ENCODE measurements at regions of chr10 and their contacts with region 1.

Region 1: GRCh38 chr10:94362360-94363250 is at the start of gene NOC3L:
- DNase-seq: peak; percentile 97 to 98
- H3K4me3 ChIP-seq: peak within 1 kb of the TSS; percentile 56 to 90 (median 67)
- H3K27ac ChIP-seq: peak within 1 kb of the TSS; percentile 67 to 82 (median 75)
- H3K4me1 ChIP-seq: peaks cover 0 to 35% (median 18%) of the 10 kb centered on the region in 4 donors
- H3K27me3 ChIP-seq: no peaks in the 10 kb centered on the region
- CTCF ChIP-seq: peak in 5 of 7 experiments; percentile 76 to 93 (median 90)
- EP300 ChIP-seq: no peak
- POLR2A ChIP-seq: no peak
- total RNA-seq, gene NOC3L: 0.58 to 28.5 (median 8.5) TPM

Region 2: GRCh38 chr10:94232709-94233383 is 129.8 kb before region 1 on chr10:
- intact Hi-C with region 1: no loop called
- DNase-seq: no peak
- H3K4me3 ChIP-seq: no peak overlapping the region
- H3K27ac ChIP-seq: no peak overlapping the region
- H3K4me1 ChIP-seq: no peaks in the 10 kb centered on the region
- H3K27me3 ChIP-seq: no peaks in the 10 kb centered on the region
- CTCF ChIP-seq: no peak
- EP300 ChIP-seq: no peak
- POLR2A ChIP-seq: no peak

Region 3: GRCh38 chr10:94402015-94402842 is 39.6 kb after region 1 on chr10 and contains the start of gene TBC1D12:
- intact Hi-C with region 1: loop called (anchors 5 kb)
- DNase-seq: peak; percentile 95 to 98
- H3K4me3 ChIP-seq: peak within 1 kb of the TSS; percentile 71 to 91 (median 88)
- H3K27ac ChIP-seq: peak within 1 kb of the TSS; percentile 95 to 99 (median 97)
- H3K4me1 ChIP-seq: peaks cover 9 to 35% (median 24%) of the 10 kb centered on the region in 4 donors
- H3K27me3 ChIP-seq: peaks cover 0 to 23% (median 0%) of the 10 kb centered on the region in 3 donors
- CTCF ChIP-seq: no peak
- EP300 ChIP-seq: no peak
- POLR2A ChIP-seq: no peak
- total RNA-seq, gene TBC1D12: 12.8 to 163 (median 26.8) TPM

Region 4: GRCh38 chr10:94443047-94443446 is 80.4 kb after region 1 on chr10:
- intact Hi-C with region 1: loop called (anchors 10 kb)
- DNase-seq: no peak
- H3K4me3 ChIP-seq: no peak overlapping the region
- H3K27ac ChIP-seq: peak overlapping the region in 1 of 5 donors; percentile 37
- H3K4me1 ChIP-seq: peaks cover 0 to 25% (median 14%) of the 10 kb centered on the region in 4 donors
- H3K27me3 ChIP-seq: no peaks in the 10 kb centered on the region
- CTCF ChIP-seq: no peak
- EP300 ChIP-seq: no peak
- POLR2A ChIP-seq: no peak